ENCODE measurements at regions of chr12 and their contacts with region 1.

Region 1: GRCh38 chr12:18224745-18225144 is 36.6 kb upstream of the PIK3C2G start:
- DNase-seq: no peak
- ATAC-seq: peak; percentile 37; the same call in 1 of the 3 replicates
- H3K4me3 ChIP-seq: no peak overlapping the region
- H3K27ac ChIP-seq: no peak overlapping the region
- H3K4me1 ChIP-seq: no peaks in the 10 kb centered on the region
- H3K27me3 ChIP-seq: no peaks in the 10 kb centered on the region
- CTCF ChIP-seq: peak; percentile 8 to 40 (median 22); a peak in 2 of 6 replicates
- EP300 ChIP-seq: no peak
- POLR2A ChIP-seq: no peak
- RAD21 ChIP-seq: peak; percentile 72

Region 2: DNA sequence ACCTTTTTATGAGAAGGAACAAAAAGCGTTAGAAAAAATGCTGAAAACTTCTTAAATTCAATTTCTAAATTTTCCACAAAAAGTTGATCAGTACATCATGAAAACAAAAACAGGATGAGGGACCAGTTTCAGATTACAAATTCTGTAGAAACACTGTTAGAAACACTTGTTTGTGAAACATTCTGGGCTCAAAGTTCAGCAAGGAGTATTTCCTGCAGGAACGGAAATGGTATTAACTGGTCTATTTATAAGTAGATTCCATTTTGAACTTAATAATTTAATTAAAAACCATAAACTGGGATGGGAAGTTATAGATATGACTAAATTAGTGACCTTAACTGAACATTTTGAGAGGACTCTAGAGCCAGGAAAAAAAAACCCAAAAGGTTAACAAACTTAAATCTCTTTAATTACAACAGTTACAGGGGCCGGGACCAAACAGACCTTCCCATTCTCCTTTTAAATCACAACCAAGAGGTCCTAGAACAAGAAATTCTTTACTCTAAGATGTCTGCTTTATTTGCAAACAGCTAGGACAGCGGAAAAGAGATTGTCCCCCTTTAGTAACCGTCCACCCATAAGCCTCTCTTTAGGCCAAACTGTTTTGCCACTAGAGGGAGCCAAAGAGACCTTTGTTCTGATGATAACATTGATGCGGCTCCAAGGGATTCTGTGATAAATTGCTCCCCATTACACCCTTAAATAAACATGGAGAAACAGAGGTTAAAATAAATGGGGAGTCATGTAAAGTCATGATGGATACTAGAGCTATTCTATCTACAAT is 65.8 kb before region 1 on chr12:
- CTCF ChIA-PET with region 1: interaction called, 8 read pairs
- POLR2A ChIA-PET with region 1: no interaction called
- RAD21 ChIA-PET with region 1: interaction called, 4 read pairs
- SMC1A ChIA-PET with region 1: interaction called, 5 read pairs
- in situ Hi-C with region 1: no loop called
- intact Hi-C with region 1: loop called (anchors 2 kb)
- DNase-seq: no peak
- ATAC-seq: peak; percentile 76
- H3K4me3 ChIP-seq: no peak overlapping the region
- H3K27ac ChIP-seq: no peak overlapping the region
- H3K4me1 ChIP-seq: no peaks in the 10 kb centered on the region
- H3K27me3 ChIP-seq: no peaks in the 10 kb centered on the region
- CTCF ChIP-seq: peak; percentile 50 to 77 (median 63)
- EP300 ChIP-seq: no peak
- POLR2A ChIP-seq: no peak
- RAD21 ChIP-seq: peak; percentile 58

Measured in GM12878 (cell line).